Prostate gland (tissue), 2 donors: ENCODE measurements at regions of chr18 and their contacts with region 1.

Region 1: DNA sequence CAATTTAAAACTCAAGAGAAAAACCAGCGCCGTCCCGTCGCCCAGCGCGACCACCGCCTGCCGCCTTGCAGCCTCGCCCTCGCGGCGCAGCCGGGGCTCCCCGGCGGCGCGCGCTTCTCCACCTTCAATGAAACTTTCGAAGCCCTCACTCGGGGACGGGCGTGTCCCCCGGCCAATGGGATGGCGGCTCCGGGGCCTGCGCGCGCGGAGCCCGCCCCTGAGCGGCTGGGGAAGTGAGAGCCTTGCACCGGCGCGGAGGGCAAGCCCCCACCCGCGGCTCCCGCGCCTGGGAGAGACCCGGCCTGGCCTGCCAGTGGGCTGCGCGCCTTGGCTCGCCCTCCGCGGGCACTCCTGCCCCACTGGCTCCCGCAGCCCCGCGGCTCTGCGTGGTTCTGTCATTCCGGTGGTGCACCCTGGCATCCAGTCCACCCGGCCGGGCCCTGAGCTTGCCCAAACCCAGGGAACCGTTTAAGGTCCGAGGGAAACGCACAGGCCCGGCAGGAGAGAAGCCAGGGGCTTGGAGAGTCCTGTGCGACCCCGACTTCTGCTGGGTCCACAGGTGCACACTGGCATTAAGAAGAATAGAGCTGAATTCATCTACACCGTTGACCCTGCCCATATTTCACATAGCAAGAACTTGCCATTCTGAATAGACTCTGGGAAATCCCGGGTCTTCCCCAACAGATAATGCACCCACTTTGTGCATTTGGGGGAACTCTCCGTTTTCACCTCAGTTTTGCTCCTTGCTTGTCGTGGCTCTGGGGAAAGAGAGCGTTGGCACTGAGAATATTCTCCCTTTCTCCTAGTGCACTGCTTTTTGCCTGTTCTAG is at the start of gene PIEZO2:
- DNase-seq: peak; percentile 24
- H3K4me3 ChIP-seq: peak within 1 kb of the TSS; percentile 37 to 41
- H3K27ac ChIP-seq: peak within 1 kb of the TSS in 1 of 2 donors; percentile 50
- H3K4me1 ChIP-seq: no peaks in the 10 kb centered on the region
- H3K27me3 ChIP-seq: peaks cover 10% of the 10 kb centered on the region
- CTCF ChIP-seq: no peak
- POLR2A ChIP-seq: peak; percentile 46
- total RNA-seq, gene PIEZO2: 4.1 to 19.0 TPM

Region 2: GRCh38 chr18:10560450-10561045 is 589.1 kb before region 1 on chr18:
- intact Hi-C with region 1: loop called (anchors 5 kb)
- DNase-seq: peak; percentile 80
- H3K4me3 ChIP-seq: peak overlapping the region in 1 of 2 donors; percentile 7
- H3K27ac ChIP-seq: peak overlapping the region in 1 of 2 donors; percentile 35
- H3K4me1 ChIP-seq: no peaks in the 10 kb centered on the region
- H3K27me3 ChIP-seq: no peaks in the 10 kb centered on the region
- CTCF ChIP-seq: peak in 3 of 4 experiments; percentile 75 to 80 (median 80)
- POLR2A ChIP-seq: no peak

Region 3: DNA sequence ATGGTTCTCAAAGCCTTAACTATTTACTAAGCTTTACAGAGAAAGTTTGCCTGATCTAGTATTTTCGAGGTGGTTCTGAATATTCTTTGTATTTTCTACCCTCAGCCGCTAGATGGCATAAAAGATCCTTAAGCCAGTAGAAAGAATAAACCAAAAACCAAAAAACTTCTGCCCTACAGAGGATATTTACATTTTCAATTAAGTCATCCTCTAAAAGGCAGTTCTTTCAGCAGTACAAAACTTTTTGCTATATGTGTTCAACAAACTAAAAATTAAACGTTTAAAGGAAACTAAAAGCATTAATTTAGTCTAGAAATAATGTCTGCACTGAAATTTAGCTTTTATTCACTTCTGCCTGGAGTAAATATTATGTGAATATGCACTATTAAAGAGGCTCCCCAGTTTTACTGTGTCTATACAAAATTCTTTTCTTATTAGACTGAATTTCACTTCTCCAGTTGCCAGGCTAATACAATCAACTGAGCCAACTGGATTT is 297.8 kb before region 1 on chr18:
- intact Hi-C with region 1: loop called (anchors 2 kb)
- DNase-seq: no peak
- H3K4me3 ChIP-seq: no peak overlapping the region
- H3K27ac ChIP-seq: no peak overlapping the region
- H3K4me1 ChIP-seq: no peaks in the 10 kb centered on the region
- H3K27me3 ChIP-seq: no peaks in the 10 kb centered on the region
- CTCF ChIP-seq: peak in 3 of 4 experiments; percentile 52 to 80 (median 80)
- POLR2A ChIP-seq: no peak

Region 4: DNA sequence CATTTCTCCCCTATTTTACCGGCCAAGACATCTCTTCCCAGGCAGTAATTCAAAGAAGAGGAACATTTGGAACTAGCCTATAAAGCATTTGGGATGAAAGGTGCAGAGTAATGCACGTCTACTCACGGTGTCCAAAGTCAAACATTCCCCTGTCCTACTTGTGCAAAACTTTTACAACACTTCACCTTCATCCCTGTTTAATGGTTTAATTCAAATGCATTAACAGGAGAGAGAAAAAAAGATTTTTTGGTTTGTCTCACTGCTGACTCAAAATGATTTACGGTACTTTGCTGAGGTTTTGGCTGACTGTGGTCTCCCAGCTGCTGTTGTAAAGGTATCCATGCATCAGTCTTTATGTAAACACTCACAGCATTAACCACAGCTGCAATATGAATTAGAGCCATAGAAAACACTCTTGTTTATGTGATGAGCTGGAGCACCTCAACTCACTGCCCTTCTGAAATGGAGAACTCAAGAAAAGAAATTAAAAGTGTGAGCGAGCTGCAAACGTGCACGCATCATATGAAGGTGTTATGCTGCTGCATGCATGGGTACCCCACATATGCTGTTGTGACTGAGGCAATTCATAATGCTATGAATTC is 220.8 kb before region 1 on chr18:
- intact Hi-C with region 1: loop called (anchors 10 kb)
- DNase-seq: no peak
- H3K4me3 ChIP-seq: no peak overlapping the region
- H3K27ac ChIP-seq: no peak overlapping the region
- H3K4me1 ChIP-seq: no peaks in the 10 kb centered on the region
- H3K27me3 ChIP-seq: no peaks in the 10 kb centered on the region
- CTCF ChIP-seq: no peak
- POLR2A ChIP-seq: no peak

Region 5: GRCh38 chr18:11040823-11041656 is 108.6 kb before region 1 on chr18:
- intact Hi-C with region 1: loop called (anchors 5 kb)
- DNase-seq: peak; percentile 25
- H3K4me3 ChIP-seq: no peak overlapping the region
- H3K27ac ChIP-seq: no peak overlapping the region
- H3K4me1 ChIP-seq: no peaks in the 10 kb centered on the region
- H3K27me3 ChIP-seq: no peaks in the 10 kb centered on the region
- CTCF ChIP-seq: peak; percentile 44 to 54 (median 48)
- POLR2A ChIP-seq: no peak

Region 6: GRCh38 chr18:11199477-11199876 is 49.8 kb after region 1 on chr18:
- intact Hi-C with region 1: no loop called
- DNase-seq: no peak
- H3K4me3 ChIP-seq: no peak overlapping the region
- H3K27ac ChIP-seq: no peak overlapping the region
- H3K4me1 ChIP-seq: no peaks in the 10 kb centered on the region
- H3K27me3 ChIP-seq: no peaks in the 10 kb centered on the region
- CTCF ChIP-seq: no peak
- POLR2A ChIP-seq: no peak

Region 7: GRCh38 chr18:11398625-11399024 is 249.0 kb after region 1 on chr18:
- intact Hi-C with region 1: no loop called
- DNase-seq: no peak
- H3K4me3 ChIP-seq: no peak overlapping the region
- H3K27ac ChIP-seq: no peak overlapping the region
- H3K4me1 ChIP-seq: no peaks in the 10 kb centered on the region
- H3K27me3 ChIP-seq: no peaks in the 10 kb centered on the region
- CTCF ChIP-seq: no peak
- POLR2A ChIP-seq: no peak

Region 8: DNA sequence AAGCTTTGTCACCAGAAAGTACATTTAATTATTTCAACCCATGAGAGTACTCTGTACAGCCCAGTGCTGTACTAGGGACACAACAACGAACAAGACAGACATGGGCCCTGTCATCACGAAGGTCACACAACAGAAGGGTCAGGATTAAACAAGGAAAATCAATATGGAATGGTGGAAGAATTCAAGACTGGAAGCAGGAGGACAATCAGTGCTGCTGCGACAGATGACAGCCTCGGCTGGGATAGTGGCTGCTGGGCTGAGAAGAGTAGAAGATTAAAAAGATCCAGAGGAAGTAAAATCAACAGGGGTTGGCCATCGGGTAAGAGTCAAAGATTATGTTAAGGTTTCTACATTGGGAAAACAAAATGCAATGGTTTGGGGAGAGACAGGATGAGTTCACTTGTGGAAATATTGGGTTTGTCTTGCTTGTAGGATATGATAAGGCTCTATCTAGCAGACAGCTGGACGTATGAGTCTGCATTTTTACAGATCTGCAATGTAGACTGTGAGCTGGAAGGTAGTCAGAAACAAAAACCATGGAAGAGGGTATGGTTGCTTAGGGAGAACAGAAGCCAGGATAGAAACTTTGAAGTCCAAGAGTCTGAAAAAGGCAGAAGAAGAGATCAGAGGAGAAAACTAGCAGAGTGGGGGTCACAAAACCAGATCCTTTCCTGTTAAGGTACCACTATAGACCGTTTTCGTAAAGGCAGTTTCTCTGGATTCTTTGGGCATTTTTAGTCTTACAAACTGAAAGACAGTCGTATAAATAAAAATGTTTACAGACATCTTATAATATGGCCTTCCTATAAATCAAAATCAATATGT is 1342.2 kb after region 1 on chr18:
- intact Hi-C with region 1: no loop called
- DNase-seq: no peak
- H3K4me3 ChIP-seq: no peak overlapping the region
- H3K27ac ChIP-seq: no peak overlapping the region
- H3K4me1 ChIP-seq: no peaks in the 10 kb centered on the region
- H3K27me3 ChIP-seq: no peaks in the 10 kb centered on the region
- CTCF ChIP-seq: no peak
- POLR2A ChIP-seq: no peak